Common myeloid progenitor, CD34-positive (primary cell): ENCODE measurements at regions of chr15 and their contacts with region 1.

Region 1: GRCh38 chr15:64893481-64894394 is 18.0 kb upstream of the ANKDD1A start:
- DNase-seq: peak; percentile 100
- H3K4me3 ChIP-seq: peak overlapping the region in 6 of 7 experiments; percentile 30 to 68 (median 62)
- H3K27ac ChIP-seq: peak overlapping the region; percentile 85 to 94
- H3K4me1 ChIP-seq: peaks cover 26 to 77% (median 72%) of the 10 kb centered on the region in 4 experiments
- H3K27me3 ChIP-seq: no peaks in the 10 kb centered on the region

Region 2: GRCh38 chr15:64836023-64836536 is 57.7 kb before region 1 on chr15:
- CTCF ChIA-PET with region 1: interaction called, 25 read pairs
- POLR2A ChIA-PET with region 1: interaction called, 6 read pairs
- DNase-seq: no peak
- H3K4me3 ChIP-seq: peak overlapping the region in 3 of 7 experiments; percentile 29 to 42 (median 40)
- H3K27ac ChIP-seq: peak overlapping the region in 1 of 2 experiments; percentile 25
- H3K4me1 ChIP-seq: peaks cover 7 to 51% (median 24%) of the 10 kb centered on the region in 4 experiments
- H3K27me3 ChIP-seq: no peaks in the 10 kb centered on the region

Region 3: GRCh38 chr15:64841258-64842095 is 52.3 kb before region 1 on chr15 and contains the start of gene PLEKHO2:
- CTCF ChIA-PET with region 1: interaction called, 25 read pairs
- POLR2A ChIA-PET with region 1: interaction called, 19 read pairs
- DNase-seq: peak; percentile 95 to 99 (median 98)
- H3K4me3 ChIP-seq: peak within 1 kb of the TSS; percentile 71 to 99 (median 90)
- H3K27ac ChIP-seq: peak within 1 kb of the TSS; percentile 74 to 86
- H3K4me1 ChIP-seq: peaks cover 18 to 86% (median 62%) of the 10 kb centered on the region in 4 experiments
- H3K27me3 ChIP-seq: no peaks in the 10 kb centered on the region

Region 4: DNA sequence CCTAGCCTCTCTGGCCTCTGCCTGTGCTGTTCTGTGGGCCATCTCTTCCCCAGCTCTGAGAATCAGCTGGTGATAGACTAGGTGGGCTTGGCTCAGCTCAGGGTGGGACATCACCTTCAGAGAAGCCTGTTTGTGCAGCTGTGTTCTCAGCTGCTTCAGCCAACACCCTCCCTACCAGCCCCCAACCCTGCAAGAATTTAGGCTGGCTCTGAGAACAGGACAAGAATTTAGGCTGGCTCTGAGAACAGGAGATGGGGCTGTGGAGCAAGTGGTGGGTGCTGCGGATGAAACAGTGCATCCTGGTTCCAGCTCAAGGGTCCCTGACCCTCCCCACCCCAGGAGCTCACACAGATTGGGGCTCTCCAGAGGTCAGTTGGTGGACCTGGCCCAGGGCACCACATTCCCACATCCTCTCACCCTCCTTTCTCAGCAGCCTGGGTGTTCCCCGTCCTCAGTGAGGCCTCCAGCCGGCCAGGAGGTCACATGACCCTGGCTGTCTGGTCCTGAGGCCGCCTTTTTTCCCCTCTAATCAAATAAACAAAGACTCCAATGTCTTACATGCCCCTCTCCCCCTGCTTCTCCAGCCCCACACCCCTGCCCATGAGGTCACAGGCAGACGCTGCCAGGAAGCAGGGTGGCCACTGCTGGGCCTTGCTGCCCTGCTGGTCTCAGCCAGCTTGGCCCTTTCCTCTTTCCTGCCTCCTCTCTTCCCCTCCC is 37.2 kb before region 1 on chr15:
- CTCF ChIA-PET with region 1: interaction called, 12 read pairs
- POLR2A ChIA-PET with region 1: no interaction called
- DNase-seq: no peak
- H3K4me3 ChIP-seq: peak overlapping the region in 2 of 7 experiments; percentile 4 to 8
- H3K27ac ChIP-seq: peak overlapping the region in 1 of 2 experiments; percentile 39
- H3K4me1 ChIP-seq: peaks cover 0 to 41% (median 36%) of the 10 kb centered on the region in 4 experiments
- H3K27me3 ChIP-seq: no peaks in the 10 kb centered on the region

Region 5: GRCh38 chr15:64877435-64877834 is 16.3 kb before region 1 on chr15:
- CTCF ChIA-PET with region 1: interaction called, 48 read pairs
- POLR2A ChIA-PET with region 1: interaction called, 67 read pairs
- DNase-seq: peak in 1 of 3 donors; percentile 34
- H3K4me3 ChIP-seq: peak overlapping the region in 1 of 7 experiments; percentile 28
- H3K27ac ChIP-seq: peak overlapping the region in 1 of 2 experiments; percentile 61
- H3K4me1 ChIP-seq: peaks cover 11 to 68% (median 54%) of the 10 kb centered on the region in 4 experiments
- H3K27me3 ChIP-seq: no peaks in the 10 kb centered on the region

Region 6: DNA sequence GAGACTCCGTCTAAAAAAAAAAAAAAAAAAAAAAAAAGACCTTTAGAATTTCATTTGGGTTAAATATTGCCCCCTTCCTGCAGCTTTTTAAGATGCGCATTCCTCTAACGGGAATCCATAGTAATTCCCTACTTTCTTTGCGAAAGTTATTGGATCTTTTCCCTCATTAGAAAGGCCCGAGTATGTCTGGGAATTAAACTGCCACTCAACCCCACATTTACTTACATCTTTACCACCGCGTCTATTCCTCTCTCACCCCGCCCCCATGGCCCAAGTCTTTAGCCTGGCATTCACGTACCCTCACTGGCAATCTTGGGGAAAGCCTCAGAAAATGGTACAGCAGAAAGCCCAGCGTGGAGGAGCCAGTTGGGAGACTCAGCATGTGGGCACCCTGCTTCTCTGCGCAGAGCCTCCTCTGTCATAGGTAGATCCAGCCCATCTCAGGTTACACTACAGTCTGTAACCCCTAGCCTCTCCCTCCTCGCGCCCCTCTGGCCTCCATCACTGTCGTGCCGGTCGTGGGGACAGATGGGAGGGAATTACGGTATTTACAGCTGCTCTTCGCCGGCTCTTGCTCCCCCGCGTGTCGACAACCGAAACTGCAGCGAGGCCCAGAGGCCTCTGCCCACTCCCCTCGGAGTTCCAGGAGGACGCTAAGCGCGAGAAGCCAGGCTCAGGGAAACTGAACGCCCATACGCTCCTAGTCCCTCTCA is 11.5 kb after region 1 on chr15:
- CTCF ChIA-PET with region 1: interaction called, 24 read pairs
- POLR2A ChIA-PET with region 1: interaction called, 5 read pairs
- DNase-seq: peak; percentile 81 to 86 (median 86)
- H3K4me3 ChIP-seq: peak overlapping the region in 4 of 7 experiments; percentile 55 to 73 (median 63)
- H3K27ac ChIP-seq: no peak overlapping the region
- H3K4me1 ChIP-seq: peaks cover 3 to 10% (median 6%) of the 10 kb centered on the region in 4 experiments
- H3K27me3 ChIP-seq: peaks cover 0 to 1% (median 0%) of the 10 kb centered on the region in 5 experiments

Region 7: DNA sequence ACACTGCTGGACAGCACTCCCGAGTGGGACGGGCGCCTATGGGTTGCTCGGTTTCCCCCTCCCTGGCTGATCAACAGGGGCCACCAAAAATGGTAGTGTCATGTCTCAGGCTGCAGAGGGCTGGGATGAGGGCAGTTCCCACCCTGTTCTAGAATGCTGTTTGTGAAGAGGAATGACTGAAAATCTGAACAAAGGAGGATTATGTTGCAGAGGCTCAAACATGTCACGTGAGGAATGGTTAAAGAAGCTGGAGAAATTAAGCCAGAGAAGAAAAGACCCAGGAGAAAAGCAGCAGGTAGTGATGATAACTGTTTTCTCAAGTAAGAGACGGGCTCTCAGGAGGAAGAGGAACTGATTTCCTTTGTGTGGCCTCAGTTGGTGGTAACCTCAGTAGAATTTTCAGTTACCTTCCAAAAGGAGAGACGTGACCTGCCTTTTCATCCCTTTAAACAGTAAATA is 85.5 kb after region 1 on chr15:
- CTCF ChIA-PET with region 1: no interaction called
- POLR2A ChIA-PET with region 1: no interaction called
- DNase-seq: no peak
- H3K4me3 ChIP-seq: no peak overlapping the region
- H3K27ac ChIP-seq: no peak overlapping the region
- H3K4me1 ChIP-seq: peaks cover 4 to 9% (median 5%) of the 10 kb centered on the region in 4 experiments
- H3K27me3 ChIP-seq: no peaks in the 10 kb centered on the region